Endothelial cell of umbilical vein (primary cell): ENCODE measurements at regions of chr10 and their contacts with region 1.

Region 1: GRCh38 chr10:22648547-22648961 is 65.8 kb downstream of the PIP4K2A start:
- DNase-seq: peak; percentile 63
- H3K4me3 ChIP-seq: peak overlapping the region in 1 of 3 experiments; percentile 42
- H3K27ac ChIP-seq: peak overlapping the region; percentile 66
- H3K4me1 ChIP-seq: peaks cover 34% of the 10 kb centered on the region
- H3K27me3 ChIP-seq: no peaks in the 10 kb centered on the region
- CTCF ChIP-seq: no peak
- POLR2A ChIP-seq: no peak

Region 2: GRCh38 chr10:22631646-22632278 is 16.8 kb before region 1 on chr10:
- CTCF ChIA-PET with region 1: no interaction called
- POLR2A ChIA-PET with region 1: no interaction called
- dilution Hi-C with region 1: no loop called
- intact Hi-C with region 1: loop called (anchors 2 kb)
- DNase-seq: peak; percentile 81
- H3K4me3 ChIP-seq: peak overlapping the region in 1 of 3 experiments; percentile 34
- H3K27ac ChIP-seq: peak overlapping the region; percentile 78
- H3K4me1 ChIP-seq: peaks cover 31% of the 10 kb centered on the region
- H3K27me3 ChIP-seq: no peaks in the 10 kb centered on the region
- CTCF ChIP-seq: no peak
- POLR2A ChIP-seq: no peak

Region 3: DNA sequence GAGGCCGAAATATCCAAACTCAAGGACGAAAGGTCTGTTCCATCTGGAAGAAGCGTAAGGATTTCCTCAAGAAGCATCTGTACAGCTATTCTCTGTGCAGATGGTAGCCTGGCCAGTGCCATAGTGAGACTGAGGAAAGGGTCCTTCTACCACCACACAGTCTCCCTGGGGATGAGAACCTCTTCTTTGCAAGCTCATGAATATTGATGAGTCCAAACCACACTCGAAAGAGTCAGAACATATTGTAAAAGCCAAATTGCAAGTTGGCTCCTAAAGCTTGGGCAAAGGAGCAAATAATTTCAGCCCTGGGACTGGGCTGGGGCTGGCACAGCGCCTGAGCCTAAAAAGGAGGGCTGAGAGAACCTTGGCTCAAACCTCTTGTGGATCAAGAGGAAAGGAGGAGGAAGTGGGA is 131.9 kb after region 1 on chr10:
- CTCF ChIA-PET with region 1: no interaction called
- POLR2A ChIA-PET with region 1: no interaction called
- dilution Hi-C with region 1: no loop called
- intact Hi-C with region 1: no loop called
- DNase-seq: no peak
- H3K4me3 ChIP-seq: no peak overlapping the region
- H3K27ac ChIP-seq: no peak overlapping the region
- H3K4me1 ChIP-seq: no peaks in the 10 kb centered on the region
- H3K27me3 ChIP-seq: no peaks in the 10 kb centered on the region
- CTCF ChIP-seq: no peak
- POLR2A ChIP-seq: no peak

Region 4: DNA sequence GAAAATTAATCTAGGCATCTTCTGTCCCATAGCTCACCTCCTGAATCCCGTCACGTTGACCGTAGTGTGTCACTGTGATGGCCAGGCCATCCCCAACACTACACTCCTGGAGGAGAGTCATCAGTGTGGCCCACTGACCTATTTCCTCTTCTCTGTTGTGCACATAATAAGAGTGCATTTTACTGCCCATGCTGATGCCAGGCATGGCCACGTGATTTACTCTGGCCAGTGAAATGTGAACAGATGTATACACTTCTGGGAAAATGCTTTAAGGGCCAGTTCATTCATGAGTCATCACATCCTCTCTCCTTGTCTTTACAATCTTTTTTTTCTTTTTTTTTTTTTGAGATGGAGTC is 167.7 kb after region 1 on chr10:
- CTCF ChIA-PET with region 1: no interaction called
- POLR2A ChIA-PET with region 1: no interaction called
- dilution Hi-C with region 1: no loop called
- intact Hi-C with region 1: loop called (anchors 1 kb)
- DNase-seq: peak; percentile 93
- H3K4me3 ChIP-seq: no peak overlapping the region
- H3K27ac ChIP-seq: peak overlapping the region; percentile 86
- H3K4me1 ChIP-seq: peaks cover 15% of the 10 kb centered on the region
- H3K27me3 ChIP-seq: no peaks in the 10 kb centered on the region
- CTCF ChIP-seq: no peak
- POLR2A ChIP-seq: no peak